HepG2 (cell line): ENCODE measurements at regions of chr11 and their contacts with region 1.

Region 1: DNA sequence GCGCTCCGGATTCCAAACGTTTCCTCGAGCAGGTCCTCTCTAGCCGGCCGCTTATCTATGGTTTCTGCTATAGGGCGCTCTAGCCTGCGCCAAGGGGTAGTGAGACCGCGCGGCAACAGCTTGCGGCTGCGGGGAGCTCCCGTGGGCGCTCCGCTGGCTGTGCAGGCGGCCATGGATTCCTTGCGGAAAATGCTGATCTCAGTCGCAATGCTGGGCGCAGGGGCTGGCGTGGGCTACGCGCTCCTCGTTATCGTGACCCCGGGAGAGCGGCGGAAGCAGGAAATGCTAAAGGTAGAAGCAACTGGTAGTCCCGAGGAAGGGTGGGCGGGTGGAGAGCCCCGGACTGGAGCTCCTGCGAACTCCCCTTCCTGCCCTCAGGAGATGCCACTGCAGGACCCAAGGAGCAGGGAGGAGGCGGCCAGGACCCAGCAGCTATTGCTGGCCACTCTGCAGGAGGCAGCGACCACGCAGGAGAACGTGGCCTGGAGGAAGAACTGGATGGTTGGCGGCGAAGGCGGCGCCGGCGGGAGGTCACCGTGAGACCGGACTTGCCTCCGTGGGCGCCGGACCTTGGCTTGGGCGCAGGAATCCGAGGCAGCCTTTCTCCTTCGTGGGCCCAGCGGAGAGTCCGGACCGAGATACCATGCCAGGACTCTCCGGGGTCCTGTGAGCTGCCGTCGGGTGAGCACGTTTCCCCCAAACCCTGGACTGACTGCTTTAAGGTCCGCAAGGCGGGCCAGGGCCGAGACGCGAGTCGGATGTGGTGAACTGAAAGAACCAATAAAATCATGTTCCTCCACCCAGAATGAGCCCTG is at the starts of genes LBHD1 and UQCC3:
- DNase-seq: peak; percentile 79
- ATAC-seq: peak; percentile 83
- H3K4me3 ChIP-seq: peak within 1 kb of the TSS; percentile 76 to 98 (median 91)
- H3K27ac ChIP-seq: peak within 1 kb of the TSS; percentile 90
- H3K4me1 ChIP-seq: peaks cover 59% of the 10 kb centered on the region
- H3K27me3 ChIP-seq: no peaks in the 10 kb centered on the region; a peak in 1 of 5 replicates
- CTCF ChIP-seq: no peak; the same call in none of the 2 replicates
- EP300 ChIP-seq: peak in 1 of 2 experiments; percentile 21; a peak in 1 of 4 replicates
- POLR2A ChIP-seq: peak; percentile 80 to 82
- RAD21 ChIP-seq: no peak
- total RNA-seq, gene LBHD1: 1.4 and 3.7 TPM in 2 replicates
- total RNA-seq, gene UQCC3: 12.1 and 16.0 TPM in 2 replicates

Region 2: DNA sequence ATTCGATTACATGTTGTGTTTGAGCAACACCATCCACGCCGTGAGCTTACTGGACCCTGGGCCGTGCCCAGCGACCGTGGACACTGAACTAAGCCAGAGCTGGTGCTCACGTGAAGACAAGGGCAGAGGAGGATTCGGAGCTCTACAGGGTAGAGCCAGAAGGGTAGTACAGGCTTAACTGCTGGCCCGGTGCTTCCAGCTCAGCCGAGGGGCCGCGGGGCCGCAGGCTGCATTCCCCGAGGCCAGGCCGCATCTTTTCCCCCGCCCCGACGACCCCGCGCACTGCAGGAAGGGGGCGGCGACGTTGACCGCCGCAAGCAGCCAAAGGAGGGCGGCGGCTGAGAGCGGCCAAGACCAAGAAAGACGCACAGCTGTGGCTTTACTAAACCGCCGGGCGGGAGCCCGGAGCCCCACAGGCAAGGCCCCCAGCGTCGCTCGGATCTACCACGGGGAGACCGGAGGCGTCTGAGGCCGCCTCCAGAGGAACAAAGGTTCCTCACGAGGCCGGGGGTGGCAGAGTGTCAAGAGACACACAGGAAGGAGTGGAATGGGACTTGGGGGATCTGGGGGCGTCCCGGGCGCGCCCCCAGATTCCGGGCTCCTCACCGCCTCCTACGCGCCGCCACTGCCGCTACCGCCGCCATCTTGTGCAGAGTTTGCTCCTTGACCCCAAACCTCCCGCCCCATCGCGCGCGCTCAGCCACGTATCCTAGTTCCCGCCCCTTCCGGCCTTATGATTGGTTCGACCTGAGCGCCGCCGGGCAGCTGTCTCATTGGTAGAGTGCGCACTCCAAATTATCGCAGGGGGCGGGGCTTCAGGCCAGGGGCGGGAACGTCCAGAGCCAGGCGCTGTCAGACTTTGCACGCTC is 25.6 kb before region 1 on chr11 and contains the start of gene GANAB:
- CTCF ChIA-PET with region 1: no interaction called
- POLR2A ChIA-PET with region 1: interaction called, 98 read pairs
- in situ Hi-C with region 1: no loop called
- intact Hi-C with region 1: no loop called
- DNase-seq: peak; percentile 95
- ATAC-seq: peak; percentile 94
- H3K4me3 ChIP-seq: peak within 1 kb of the TSS; percentile 86 to 96 (median 90)
- H3K27ac ChIP-seq: peak within 1 kb of the TSS; percentile 98
- H3K4me1 ChIP-seq: peaks cover 53% of the 10 kb centered on the region
- H3K27me3 ChIP-seq: no peaks in the 10 kb centered on the region
- CTCF ChIP-seq: no peak
- EP300 ChIP-seq: no peak; a peak in 1 of 4 replicates
- POLR2A ChIP-seq: peak; percentile 92 to 95
- RAD21 ChIP-seq: no peak
- total RNA-seq, gene GANAB: 50.8 and 99.5 TPM in 2 replicates

Region 3: GRCh38 chr11:62705880-62706849 is 34.4 kb after region 1 on chr11:
- CTCF ChIA-PET with region 1: no interaction called
- POLR2A ChIA-PET with region 1: interaction called, 10 read pairs
- in situ Hi-C with region 1: no loop called
- intact Hi-C with region 1: no loop called
- DNase-seq: peak; percentile 83
- ATAC-seq: peak; percentile 93
- H3K4me3 ChIP-seq: peak overlapping the region; percentile 70 to 86 (median 80)
- H3K27ac ChIP-seq: peak overlapping the region; percentile 69
- H3K4me1 ChIP-seq: peaks cover 18% of the 10 kb centered on the region
- H3K27me3 ChIP-seq: no peaks in the 10 kb centered on the region
- CTCF ChIP-seq: no peak
- EP300 ChIP-seq: no peak
- POLR2A ChIP-seq: peak in 1 of 2 experiments; percentile 74; a peak in 2 of 4 replicates
- RAD21 ChIP-seq: no peak